ENCODE measurements at regions of chr13 and their contacts with region 1.

Region 1: DNA sequence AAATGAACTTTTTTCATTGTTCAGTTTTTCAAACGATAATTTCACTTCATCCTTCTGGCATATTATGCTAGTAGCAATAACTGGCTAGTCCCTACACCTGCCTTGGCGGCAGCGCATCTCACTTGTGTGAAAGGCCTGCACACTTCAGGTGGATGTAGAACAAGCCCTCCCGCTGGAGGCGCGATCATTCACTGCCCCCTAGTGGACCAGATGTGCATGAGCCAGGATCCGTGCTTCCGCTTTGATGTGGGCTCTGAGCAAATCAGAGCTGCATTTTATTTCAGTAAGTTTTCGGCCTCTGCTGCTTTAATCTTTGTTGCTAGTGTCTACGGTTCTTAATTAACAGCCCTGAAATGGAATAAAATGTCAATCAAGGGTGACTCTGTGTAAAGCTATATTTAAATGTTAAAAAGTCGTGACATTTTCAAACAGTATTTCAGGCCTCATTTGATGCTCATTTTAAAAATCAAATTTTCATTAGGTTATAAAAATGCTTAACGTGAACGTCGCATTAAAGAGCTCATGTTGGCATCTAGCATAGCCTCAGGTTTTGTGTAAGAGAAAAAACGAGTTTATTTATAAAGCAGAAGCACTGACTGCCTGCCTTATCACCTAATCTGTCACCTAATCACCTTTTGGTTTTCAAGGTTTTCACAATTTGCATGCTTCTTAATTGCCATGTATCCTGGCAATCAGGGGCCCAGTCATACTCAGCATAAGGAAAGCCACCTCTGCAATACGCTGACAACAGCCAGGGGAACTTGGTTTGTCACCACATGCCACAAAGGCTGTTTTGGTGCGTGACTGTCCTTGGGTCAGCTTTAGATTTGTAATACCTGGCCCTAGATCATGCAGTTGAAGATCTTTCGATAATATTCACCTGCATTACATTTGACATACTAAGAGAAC is 112.2 kb downstream of the TEX26 start:
- DNase-seq: peak; percentile 84 to 91
- ATAC-seq: peak; percentile 92
- H3K4me3 ChIP-seq: no peak overlapping the region
- H3K27ac ChIP-seq: no peak overlapping the region
- H3K4me1 ChIP-seq: no peaks in the 10 kb centered on the region
- H3K27me3 ChIP-seq: no peaks in the 10 kb centered on the region

Region 2: DNA sequence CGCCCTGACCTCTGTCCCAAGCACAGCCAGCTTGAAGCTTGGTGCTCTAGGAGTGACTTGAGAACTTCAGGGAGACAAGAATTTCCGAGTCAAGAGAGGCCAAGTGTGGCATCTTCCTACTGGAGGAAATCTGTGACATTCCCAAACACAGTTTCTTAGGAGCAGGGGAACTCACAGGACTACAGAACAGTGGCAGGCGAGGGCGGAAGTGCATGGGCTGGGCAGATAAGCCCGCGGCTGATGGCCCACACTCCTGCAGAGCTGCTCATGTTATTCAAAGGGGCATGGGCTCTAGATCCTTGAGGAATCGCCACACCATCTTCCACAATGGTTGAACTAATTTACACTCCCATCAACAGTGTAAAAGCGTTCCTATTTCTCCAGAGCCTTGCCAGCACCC is 906.1 kb before region 1 on chr13:
- intact Hi-C with region 1: loop called in 1 of 2 experiments (anchors 5 kb)
- DNase-seq: no peak
- ATAC-seq: no peak
- H3K4me3 ChIP-seq: no peak overlapping the region
- H3K27ac ChIP-seq: no peak overlapping the region
- H3K4me1 ChIP-seq: no peaks in the 10 kb centered on the region
- H3K27me3 ChIP-seq: no peaks in the 10 kb centered on the region

Region 3: DNA sequence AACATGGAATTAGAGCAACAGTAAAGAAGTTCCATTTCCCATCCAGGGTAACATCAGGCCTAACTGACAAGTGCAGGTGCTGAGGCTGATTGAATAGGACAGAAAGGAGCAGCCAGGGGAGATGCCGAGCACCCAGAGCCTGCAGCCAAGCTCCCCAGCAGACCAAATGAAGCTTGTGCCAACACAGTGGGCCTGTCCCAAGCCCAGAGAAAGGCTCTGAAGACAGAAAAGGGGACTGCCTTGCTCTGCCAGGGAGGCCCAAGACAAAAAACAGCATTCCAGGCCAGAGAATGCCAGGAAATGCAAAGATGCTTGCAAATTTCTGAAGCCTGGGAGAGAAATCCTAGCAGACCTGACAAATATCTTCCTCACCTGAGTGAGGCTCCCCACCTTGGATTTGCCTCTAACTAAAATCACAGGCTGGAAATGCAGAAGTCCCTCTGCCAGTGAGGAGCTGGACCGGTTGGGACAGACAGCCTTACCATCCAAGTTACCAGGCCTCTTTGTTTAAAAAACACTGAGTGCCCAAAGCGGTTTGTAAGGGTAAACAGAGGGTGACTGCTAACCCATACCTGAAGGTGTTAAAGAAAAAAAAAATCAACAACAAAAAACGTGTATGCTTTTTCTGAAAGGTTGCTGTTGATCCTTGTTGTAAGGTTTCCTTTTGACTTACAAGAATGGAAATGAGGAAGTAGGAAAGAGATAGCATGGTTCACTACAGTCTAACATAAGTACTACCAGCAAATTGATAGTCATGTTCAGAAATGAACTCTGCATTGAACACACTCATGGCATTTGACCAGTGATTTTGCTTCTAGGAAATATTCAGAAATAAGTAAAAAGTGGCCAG is 567.1 kb before region 1 on chr13:
- intact Hi-C with region 1: loop called in 1 of 2 experiments (anchors 10 kb)
- DNase-seq: no peak
- ATAC-seq: no peak
- H3K4me3 ChIP-seq: no peak overlapping the region
- H3K27ac ChIP-seq: no peak overlapping the region
- H3K4me1 ChIP-seq: no peaks in the 10 kb centered on the region
- H3K27me3 ChIP-seq: no peaks in the 10 kb centered on the region

Region 4: GRCh38 chr13:30673669-30674521 is 370.7 kb before region 1 on chr13:
- intact Hi-C with region 1: loop called (anchors 10 kb)
- DNase-seq: peak; percentile 94 to 96
- ATAC-seq: peak; percentile 96
- H3K4me3 ChIP-seq: peak overlapping the region; percentile 0 to 16
- H3K27ac ChIP-seq: peak overlapping the region in 1 of 2 donors; percentile 62
- H3K4me1 ChIP-seq: no peaks in the 10 kb centered on the region
- H3K27me3 ChIP-seq: no peaks in the 10 kb centered on the region

Region 5: DNA sequence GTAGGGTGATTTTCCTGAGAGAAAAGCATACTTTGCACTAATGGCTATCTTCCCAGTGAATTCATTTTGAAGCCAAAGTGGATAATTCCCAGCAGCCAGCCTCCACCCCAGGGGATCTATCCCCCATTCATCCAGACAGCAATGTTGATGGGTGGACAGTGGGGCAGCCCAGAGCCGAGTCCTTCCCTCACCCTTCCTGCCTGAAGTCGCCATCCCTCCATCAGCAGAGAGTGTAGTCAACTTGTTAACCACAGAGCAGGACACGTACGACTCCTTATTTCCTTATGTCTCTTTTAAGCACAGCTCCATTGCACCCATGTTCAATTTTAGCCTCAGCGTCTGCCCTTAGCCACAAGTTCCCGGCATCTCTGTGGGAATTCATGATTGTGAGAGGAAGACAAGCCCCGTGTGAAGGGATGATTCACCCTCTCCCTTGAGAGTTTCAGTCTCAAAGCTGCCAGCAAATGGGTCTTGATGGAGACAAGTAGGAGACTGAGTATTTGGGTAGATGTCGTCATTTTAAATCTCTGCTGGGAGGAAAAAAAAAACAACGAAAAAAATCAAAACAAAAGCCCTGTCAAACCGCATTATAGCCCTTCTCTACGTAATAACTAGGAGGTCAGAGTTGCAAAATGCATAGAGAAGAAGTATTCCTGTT is 196.9 kb before region 1 on chr13:
- intact Hi-C with region 1: loop called in 1 of 2 experiments (anchors 10 kb)
- DNase-seq: peak in 1 of 2 donors; percentile 71
- ATAC-seq: peak; percentile 79
- H3K4me3 ChIP-seq: no peak overlapping the region
- H3K27ac ChIP-seq: peak overlapping the region; percentile 29 to 73
- H3K4me1 ChIP-seq: no peaks in the 10 kb centered on the region
- H3K27me3 ChIP-seq: no peaks in the 10 kb centered on the region

Region 6: GRCh38 chr13:30905932-30906383 is 138.7 kb before region 1 on chr13 and contains the start of gene MEDAG:
- intact Hi-C with region 1: loop called in 1 of 2 experiments (anchors 10 kb)
- DNase-seq: peak; percentile 92 to 96
- ATAC-seq: peak; percentile 92
- H3K4me3 ChIP-seq: peak within 1 kb of the TSS; percentile 37 to 49
- H3K27ac ChIP-seq: peak within 1 kb of the TSS; percentile 79 to 90
- H3K4me1 ChIP-seq: peaks cover 0 to 8% of the 10 kb centered on the region in 2 donors
- H3K27me3 ChIP-seq: no peaks in the 10 kb centered on the region
- total RNA-seq, gene MEDAG: 146 to 188 TPM

Region 7: GRCh38 chr13:30985637-30986205 is 58.9 kb before region 1 on chr13:
- intact Hi-C with region 1: no loop called
- DNase-seq: no peak
- ATAC-seq: no peak
- H3K4me3 ChIP-seq: no peak overlapping the region
- H3K27ac ChIP-seq: no peak overlapping the region
- H3K4me1 ChIP-seq: no peaks in the 10 kb centered on the region
- H3K27me3 ChIP-seq: no peaks in the 10 kb centered on the region

Region 8: GRCh38 chr13:31067416-31068118 is 22.9 kb after region 1 on chr13:
- intact Hi-C with region 1: no loop called
- DNase-seq: no peak
- ATAC-seq: no peak
- H3K4me3 ChIP-seq: no peak overlapping the region
- H3K27ac ChIP-seq: no peak overlapping the region
- H3K4me1 ChIP-seq: no peaks in the 10 kb centered on the region
- H3K27me3 ChIP-seq: no peaks in the 10 kb centered on the region